ENCODE measurements at regions of chr7 and their contacts with region 1.

Region 1: GRCh38 chr7:90346336-90347125 is at the start of gene GTPBP10:
- DNase-seq: peak; percentile 85 to 95 (median 91)
- H3K4me3 ChIP-seq: peak within 1 kb of the TSS; percentile 64 to 98 (median 86)
- H3K27ac ChIP-seq: peak within 1 kb of the TSS in 58 of 59 donors; percentile 21 to 93 (median 79)
- H3K27me3 ChIP-seq: no peaks in the 10 kb centered on the region
- CTCF ChIP-seq: peak; percentile 50 to 92 (median 83)
- total RNA-seq, gene GTPBP10: 14.6 to 41.8 (median 31.1) TPM

Region 2: DNA sequence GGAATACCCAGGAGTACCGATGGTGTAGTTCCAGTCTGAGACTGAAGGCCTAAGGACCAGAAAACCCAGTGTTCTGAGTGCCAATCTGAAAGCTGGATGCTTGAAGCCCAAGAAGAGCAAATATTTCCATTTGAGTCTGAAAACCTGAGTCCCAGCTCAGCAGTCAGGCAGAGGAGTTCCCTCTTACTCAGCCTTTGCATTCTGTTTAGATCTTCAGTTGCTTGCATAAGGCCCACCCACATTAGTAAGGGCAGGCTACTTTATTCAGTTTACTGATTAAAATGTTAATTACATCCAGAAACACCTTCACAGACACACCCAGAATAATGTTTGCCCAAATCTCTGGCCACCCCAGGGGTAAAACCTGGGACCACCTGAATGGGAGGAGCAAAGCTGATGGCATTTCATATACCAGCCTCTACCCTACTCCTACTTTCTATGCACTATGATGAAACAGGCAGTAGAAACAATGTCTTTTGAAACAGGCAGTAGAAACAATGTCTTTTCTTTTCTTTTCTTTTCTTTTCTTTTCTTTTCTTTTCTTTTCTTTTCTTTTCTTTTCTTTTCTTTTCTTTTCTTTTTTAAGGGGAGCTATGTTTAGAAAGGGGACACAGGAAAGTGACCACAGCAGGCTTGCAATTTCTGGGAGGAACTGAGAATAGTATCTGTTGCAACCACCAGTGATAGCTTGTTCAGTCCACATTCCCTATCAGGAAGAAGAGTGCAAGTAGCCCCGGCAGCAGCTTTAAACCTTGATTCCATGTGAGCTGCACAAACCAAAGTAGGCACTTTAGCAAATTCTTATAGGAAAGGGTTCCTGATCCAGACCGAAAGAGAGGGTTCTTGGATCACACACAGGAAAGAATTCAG is 56.1 kb before region 1 on chr7:
- intact Hi-C with region 1: no loop called
- DNase-seq: no peak
- H3K4me3 ChIP-seq: no peak overlapping the region
- H3K27ac ChIP-seq: no peak overlapping the region
- H3K27me3 ChIP-seq: no peaks in the 10 kb centered on the region
- CTCF ChIP-seq: no peak

Region 3: GRCh38 chr7:90403174-90404113 is 56.9 kb after region 1 on chr7 and contains the start of gene CLDN12:
- intact Hi-C with region 1: loop called (anchors 1 kb)
- DNase-seq: peak; percentile 62 to 94 (median 88)
- H3K4me3 ChIP-seq: peak within 1 kb of the TSS; percentile 55 to 96 (median 76)
- H3K27ac ChIP-seq: peak within 1 kb of the TSS in 57 of 59 donors; percentile 35 to 98 (median 91)
- H3K27me3 ChIP-seq: no peaks in the 10 kb centered on the region
- CTCF ChIP-seq: peak in 16 of 56 donors; percentile 7 to 30 (median 13)
- total RNA-seq, gene CLDN12: 27.6 to 91.3 (median 51.6) TPM

Region 4: GRCh38 chr7:90474284-90475210 is 128.0 kb after region 1 on chr7:
- intact Hi-C with region 1: no loop called
- DNase-seq: peak in 2 of 10 donors; percentile 35 to 48
- H3K4me3 ChIP-seq: no peak overlapping the region
- H3K27ac ChIP-seq: no peak overlapping the region
- H3K27me3 ChIP-seq: no peaks in the 10 kb centered on the region
- CTCF ChIP-seq: no peak